ENCODE measurements at regions of chr13 and their contacts with region 1.

Region 1: DNA sequence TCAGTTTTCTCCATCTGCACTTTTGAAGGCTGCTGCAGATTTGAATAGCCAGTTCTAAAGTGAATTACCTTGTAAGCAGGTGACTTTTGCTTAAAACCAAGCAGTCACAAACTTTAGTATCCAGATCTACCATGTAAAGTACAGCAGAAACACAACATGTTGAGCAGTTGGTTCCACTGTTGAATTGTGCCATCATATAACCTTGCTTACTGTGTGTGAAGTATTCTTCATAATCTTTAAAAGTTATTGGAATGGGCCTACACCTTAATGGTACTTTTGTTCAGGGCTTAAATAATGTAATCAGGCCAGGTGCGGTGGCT is 23.2 kb upstream of the MTUS2 start:
- DNase-seq: no peak
- ATAC-seq: no peak
- H3K4me3 Mint-ChIP-seq: no peak overlapping the region
- H3K27ac Mint-ChIP-seq: no peak overlapping the region
- H3K4me1 Mint-ChIP-seq: no peaks in the 10 kb centered on the region
- H3K27me3 Mint-ChIP-seq: peaks cover 7% of the 10 kb centered on the region; the same call in 1 of the 2 replicates
- CTCF ChIP-seq: no peak; the same call in 1 of the 2 replicates

Region 2: GRCh38 chr13:28313579-28313978 is 483.3 kb before region 1 on chr13:
- CTCF ChIA-PET with region 1: interaction called, 11 read pairs
- POLR2A ChIA-PET with region 1: no interaction called
- DNase-seq: peak; percentile 36
- ATAC-seq: peak; percentile 60
- H3K4me3 Mint-ChIP-seq: no peak overlapping the region
- H3K27ac Mint-ChIP-seq: 0 out of 2 replicates have a peak overlapping the region, but pooled peaks have one; percentile 50
- H3K4me1 Mint-ChIP-seq: peaks cover 5% of the 10 kb centered on the region
- H3K27me3 Mint-ChIP-seq: no peaks in the 10 kb centered on the region
- CTCF ChIP-seq: no peak

Region 3: GRCh38 chr13:28679628-28680027 is 117.3 kb before region 1 on chr13:
- CTCF ChIA-PET with region 1: interaction called, 19 read pairs
- POLR2A ChIA-PET with region 1: no interaction called
- DNase-seq: no peak
- ATAC-seq: no peak
- H3K4me3 Mint-ChIP-seq: no peak overlapping the region
- H3K27ac Mint-ChIP-seq: no peak overlapping the region
- H3K4me1 Mint-ChIP-seq: peaks cover 7% of the 10 kb centered on the region
- H3K27me3 Mint-ChIP-seq: no peaks in the 10 kb centered on the region
- CTCF ChIP-seq: no peak; the same call in 1 of the 2 replicates

Region 4: DNA sequence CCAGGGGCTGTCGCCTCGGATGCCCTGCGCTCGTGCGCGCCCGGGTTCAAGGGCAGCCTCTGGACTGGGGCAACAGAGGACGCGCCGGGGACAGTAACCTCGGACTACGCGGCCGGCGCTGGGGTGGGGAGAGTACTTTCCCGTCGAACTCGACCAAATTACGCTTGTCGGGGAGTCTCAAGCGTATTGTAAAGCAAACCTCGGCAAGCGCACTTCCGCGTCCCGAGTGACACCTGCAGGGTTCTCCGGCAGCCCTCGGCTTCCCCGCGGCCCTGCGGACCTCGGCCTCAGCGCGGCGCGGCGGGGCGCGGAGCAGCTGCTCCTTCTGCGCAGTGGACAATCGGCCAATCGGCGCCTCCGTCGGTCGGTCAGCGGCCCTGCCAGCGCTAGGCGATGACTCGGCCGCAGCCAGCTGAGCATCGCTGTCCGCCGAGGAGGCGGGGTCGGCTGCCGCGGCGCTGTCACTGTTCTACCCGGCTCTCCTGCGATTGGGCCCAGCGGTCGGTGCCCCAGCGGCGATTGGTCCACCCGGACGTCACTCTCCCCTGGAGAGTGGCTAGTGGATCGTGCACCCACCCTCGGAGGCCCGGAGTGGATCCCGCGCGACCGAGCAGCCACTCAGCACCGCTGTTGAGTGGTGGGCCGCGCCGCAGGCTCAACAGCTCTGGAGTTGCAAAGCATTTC is 78.2 kb before region 1 on chr13 and contains the start of gene SLC46A3:
- CTCF ChIA-PET with region 1: interaction called, 16 read pairs
- POLR2A ChIA-PET with region 1: no interaction called
- DNase-seq: peak; percentile 99
- ATAC-seq: peak; percentile 99
- H3K4me3 Mint-ChIP-seq: peak within 1 kb of the TSS; percentile 98
- H3K27ac Mint-ChIP-seq: 0 out of 2 replicates have a peak within 1 kb of the TSS, but pooled peaks have one; percentile 14
- H3K4me1 Mint-ChIP-seq: peaks cover 11% of the 10 kb centered on the region
- H3K27me3 Mint-ChIP-seq: peaks cover 39% of the 10 kb centered on the region
- CTCF ChIP-seq: no peak
- total RNA-seq, gene SLC46A3: 0.39 to 0.79 TPM (median 0.55 TPM) in 3 replicates

Region 5: DNA sequence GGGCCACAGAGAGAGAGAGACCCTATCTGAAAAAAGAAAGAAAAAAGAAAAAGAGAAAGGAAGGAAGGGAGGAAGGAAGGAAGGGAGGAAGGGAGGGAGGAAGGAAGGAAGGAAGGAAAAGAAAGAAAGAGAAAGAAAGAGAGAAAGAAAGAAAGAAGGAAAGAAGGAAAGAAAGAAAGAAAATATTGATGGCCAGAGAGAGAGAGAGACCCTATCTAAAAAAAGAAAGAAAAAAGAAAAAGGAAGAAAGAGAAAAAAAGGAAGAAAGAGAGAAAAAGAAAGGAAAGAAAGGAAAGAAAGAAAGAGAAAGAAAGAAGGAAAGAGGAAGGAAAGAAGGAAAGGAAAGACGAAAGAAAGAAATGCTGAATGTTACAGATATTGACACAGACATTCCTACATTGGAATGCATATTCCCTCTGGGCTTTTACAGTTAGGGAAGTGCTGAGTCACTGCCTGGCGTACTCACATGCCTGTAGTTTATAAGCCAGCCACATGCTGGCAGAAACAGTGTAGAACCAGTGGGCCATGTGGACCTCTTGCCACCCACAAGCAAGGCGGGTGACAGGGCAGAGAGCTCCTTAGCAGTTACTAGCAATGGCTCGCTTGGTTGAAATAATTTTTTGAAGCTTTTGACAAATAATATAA is 43.5 kb before region 1 on chr13:
- CTCF ChIA-PET with region 1: interaction called, 15 read pairs
- POLR2A ChIA-PET with region 1: no interaction called
- DNase-seq: peak; percentile 36
- ATAC-seq: peak; percentile 82
- H3K4me3 Mint-ChIP-seq: no peak overlapping the region
- H3K27ac Mint-ChIP-seq: peak overlapping the region; percentile 83
- H3K4me1 Mint-ChIP-seq: peaks cover 34% of the 10 kb centered on the region
- H3K27me3 Mint-ChIP-seq: no peaks in the 10 kb centered on the region
- CTCF ChIP-seq: no peak

Region 6: DNA sequence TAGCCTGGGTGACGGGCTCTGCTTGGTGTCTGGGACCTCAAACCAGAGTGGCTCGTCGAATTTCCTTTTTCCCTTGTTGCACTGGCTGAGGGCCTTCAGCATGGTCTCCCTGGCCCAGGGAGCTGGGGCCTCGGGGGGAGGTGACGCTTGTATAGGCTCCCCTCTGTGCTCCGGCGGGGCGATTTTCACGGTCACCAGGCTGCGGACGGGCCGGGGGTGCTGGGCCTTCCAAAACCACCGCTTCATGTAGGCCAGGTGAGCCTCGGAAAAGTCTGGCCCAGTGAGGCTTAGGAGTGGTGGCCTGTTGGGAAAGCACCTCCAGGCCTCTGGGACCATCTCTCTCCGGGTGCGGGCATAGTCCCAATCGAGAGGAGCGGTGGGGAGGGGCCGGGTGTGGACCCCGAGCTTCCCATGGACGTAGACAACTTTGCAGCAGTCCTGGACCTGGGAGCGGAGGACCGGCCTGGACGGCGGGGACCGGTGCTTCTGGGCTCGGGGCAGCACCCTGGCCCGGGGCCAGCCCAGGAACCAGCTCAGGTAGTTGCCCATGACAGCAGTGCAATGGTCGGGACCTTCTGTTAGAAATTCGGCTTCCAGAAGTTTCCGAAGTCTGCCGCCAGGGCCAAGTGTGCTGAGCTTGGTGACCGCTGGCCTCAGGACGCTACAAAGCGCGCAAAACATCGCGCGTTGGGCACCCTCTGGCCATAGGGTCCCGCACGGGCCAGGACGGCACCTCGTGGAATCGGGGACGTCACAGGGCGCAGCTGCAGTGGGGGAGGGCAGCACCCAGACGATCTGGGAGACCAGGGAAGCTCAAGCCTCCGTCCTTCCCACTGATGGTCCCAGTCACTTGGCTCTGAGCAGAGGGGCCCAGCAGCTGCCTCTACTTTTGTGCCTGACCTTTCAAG is 18.3 kb before region 1 on chr13:
- CTCF ChIA-PET with region 1: no interaction called
- POLR2A ChIA-PET with region 1: no interaction called
- DNase-seq: no peak
- ATAC-seq: no peak
- H3K4me3 Mint-ChIP-seq: no peak overlapping the region
- H3K27ac Mint-ChIP-seq: no peak overlapping the region
- H3K4me1 Mint-ChIP-seq: no peaks in the 10 kb centered on the region
- H3K27me3 Mint-ChIP-seq: peaks cover 5% of the 10 kb centered on the region
- CTCF ChIP-seq: no peak

Region 7: GRCh38 chr13:28819735-28820098 is 22.8 kb after region 1 on chr13:
- CTCF ChIA-PET with region 1: interaction called, 17 read pairs
- POLR2A ChIA-PET with region 1: no interaction called
- DNase-seq: peak; percentile 81
- ATAC-seq: peak; percentile 85
- H3K4me3 Mint-ChIP-seq: peak overlapping the region; percentile 69
- H3K27ac Mint-ChIP-seq: no peak overlapping the region
- H3K4me1 Mint-ChIP-seq: peaks cover 8% of the 10 kb centered on the region; the same call in 1 of the 2 replicates
- H3K27me3 Mint-ChIP-seq: peaks cover 73% of the 10 kb centered on the region
- CTCF ChIP-seq: peak; percentile 29; the same call in 1 of the 2 replicates